IMR-90 (cell line): ENCODE measurements at regions of chr20 and their contacts with region 1.

Region 1: DNA sequence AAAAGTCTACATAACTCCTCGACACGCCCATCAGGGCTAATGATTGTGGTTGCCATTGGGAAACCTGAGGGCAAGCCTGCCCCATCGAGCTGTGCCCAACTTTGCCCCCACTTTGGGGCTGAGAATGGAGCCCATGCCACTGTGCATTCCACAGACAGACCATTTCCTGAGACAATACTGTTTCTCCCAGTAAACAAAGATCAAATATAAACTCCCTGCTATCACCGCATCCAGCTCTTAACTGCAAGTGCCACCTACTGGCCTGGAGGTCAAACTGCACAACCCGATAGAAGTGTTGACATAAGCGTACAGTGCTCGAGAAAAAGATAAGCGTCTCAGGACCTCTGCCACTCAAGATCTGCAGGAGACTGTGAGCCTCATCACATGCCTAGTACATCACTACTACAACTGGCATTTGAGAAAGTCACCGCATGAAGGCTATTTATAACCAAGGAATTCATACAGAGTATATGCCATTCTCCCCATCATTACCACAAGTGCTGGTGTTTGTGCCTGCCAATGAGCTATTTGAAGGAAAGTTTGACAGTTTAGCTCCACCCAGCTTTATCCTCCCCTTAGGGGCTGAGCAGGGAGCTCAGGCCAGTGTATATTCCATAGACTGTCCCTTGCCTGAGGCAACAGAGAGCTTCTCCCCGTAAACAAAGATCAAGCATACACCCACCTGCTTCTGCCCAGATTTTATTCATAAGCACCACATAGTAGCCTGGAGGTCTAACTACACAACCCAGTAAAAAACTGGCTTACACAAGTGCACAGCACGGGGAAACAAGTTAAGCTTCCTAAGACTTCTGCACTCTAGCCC is 4.5 kb upstream of the DEFB126 start:
- DNase-seq: no peak
- ATAC-seq: no peak
- H3K4me3 ChIP-seq: no peak overlapping the region
- H3K27ac ChIP-seq: no peak overlapping the region
- H3K4me1 ChIP-seq: no peaks in the 10 kb centered on the region
- H3K27me3 ChIP-seq: 0 out of 2 replicates have a peak, but pooled peaks cover 1% of the 10 kb centered on the region
- CTCF ChIP-seq: no peak
- POLR2A ChIP-seq: no peak
- RAD21 ChIP-seq: no peak

Region 2: DNA sequence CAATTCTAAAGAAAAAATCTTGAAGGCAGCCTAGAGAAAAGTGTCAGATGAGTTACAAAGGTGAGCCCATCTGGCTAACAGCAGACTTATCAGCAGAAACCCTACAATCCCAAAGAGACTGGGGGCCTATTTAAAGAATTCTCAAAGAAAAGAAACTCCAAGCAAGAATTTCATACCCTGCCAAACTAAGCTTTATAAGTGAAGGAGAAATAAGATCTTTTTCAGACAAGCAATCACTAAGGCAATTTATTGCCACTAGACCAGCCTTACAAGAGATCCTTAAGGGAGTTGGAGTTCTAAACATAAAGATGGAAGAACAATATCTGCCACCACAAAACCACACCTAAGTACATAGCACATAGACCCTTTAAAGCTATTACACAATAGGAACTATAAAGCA is 20.4 kb before region 1 on chr20:
- CTCF ChIA-PET with region 1: no interaction called
- POLR2A ChIA-PET with region 1: no interaction called
- dilution Hi-C with region 1: no loop called
- in situ Hi-C with region 1: no loop called
- intact Hi-C with region 1: loop called (anchors 2 kb)
- DNase-seq: no peak
- ATAC-seq: no peak
- H3K4me3 ChIP-seq: no peak overlapping the region
- H3K27ac ChIP-seq: no peak overlapping the region
- H3K4me1 ChIP-seq: no peaks in the 10 kb centered on the region
- H3K27me3 ChIP-seq: no peaks in the 10 kb centered on the region
- CTCF ChIP-seq: no peak
- POLR2A ChIP-seq: no peak
- RAD21 ChIP-seq: no peak